ENCODE measurements at regions of chr17 and their contacts with region 1.

Region 1: DNA sequence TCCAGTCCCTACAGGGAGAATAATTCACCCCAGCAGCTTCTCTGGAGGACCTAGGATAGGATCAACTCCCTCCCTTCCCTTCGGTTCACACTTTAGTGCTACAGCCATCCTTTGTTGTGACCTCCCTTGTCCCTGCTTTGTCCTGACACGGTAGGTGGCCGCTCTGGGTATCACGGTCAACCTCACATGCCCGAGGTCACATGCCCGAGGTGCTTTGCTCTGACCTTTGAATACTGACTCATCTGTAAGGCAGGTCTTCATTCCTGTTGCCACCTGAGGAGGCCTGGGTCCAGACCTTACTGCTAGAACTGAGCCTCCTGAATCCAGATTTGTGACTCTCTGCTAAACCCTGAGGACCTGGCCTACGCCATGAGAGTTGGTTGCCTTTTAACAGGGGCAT is 19.7 kb downstream of the ALKBH5 start:
- DNase-seq: no peak

Region 2: GRCh38 chr17:17354560-17355349 is 848.6 kb before region 1 on chr17:
- intact Hi-C with region 1: no loop called
- DNase-seq: peak; percentile 90

Region 3: GRCh38 chr17:18176176-18176575 is 27.1 kb before region 1 on chr17:
- intact Hi-C with region 1: no loop called
- DNase-seq: no peak

Region 4: GRCh38 chr17:20155258-20156195 is 1952.2 kb after region 1 on chr17:
- intact Hi-C with region 1: loop called in 1 of 2 experiments (anchors 10 kb)
- DNase-seq: peak; percentile 98

Measured in posterior vena cava (tissue), 2 donors.